OCI-LY7 (cell line): ENCODE measurements at regions of chr4 and their contacts with region 1.

Region 1: GRCh38 chr4:78656968-78657445 is 105.4 kb downstream of the ANXA3 start:
- DNase-seq: peak; percentile 41
- H3K4me3 ChIP-seq: peak overlapping the region; percentile 28
- H3K27ac ChIP-seq: no peak overlapping the region
- H3K4me1 ChIP-seq: peaks cover 35% of the 10 kb centered on the region
- CTCF ChIP-seq: no peak

Region 2: DNA sequence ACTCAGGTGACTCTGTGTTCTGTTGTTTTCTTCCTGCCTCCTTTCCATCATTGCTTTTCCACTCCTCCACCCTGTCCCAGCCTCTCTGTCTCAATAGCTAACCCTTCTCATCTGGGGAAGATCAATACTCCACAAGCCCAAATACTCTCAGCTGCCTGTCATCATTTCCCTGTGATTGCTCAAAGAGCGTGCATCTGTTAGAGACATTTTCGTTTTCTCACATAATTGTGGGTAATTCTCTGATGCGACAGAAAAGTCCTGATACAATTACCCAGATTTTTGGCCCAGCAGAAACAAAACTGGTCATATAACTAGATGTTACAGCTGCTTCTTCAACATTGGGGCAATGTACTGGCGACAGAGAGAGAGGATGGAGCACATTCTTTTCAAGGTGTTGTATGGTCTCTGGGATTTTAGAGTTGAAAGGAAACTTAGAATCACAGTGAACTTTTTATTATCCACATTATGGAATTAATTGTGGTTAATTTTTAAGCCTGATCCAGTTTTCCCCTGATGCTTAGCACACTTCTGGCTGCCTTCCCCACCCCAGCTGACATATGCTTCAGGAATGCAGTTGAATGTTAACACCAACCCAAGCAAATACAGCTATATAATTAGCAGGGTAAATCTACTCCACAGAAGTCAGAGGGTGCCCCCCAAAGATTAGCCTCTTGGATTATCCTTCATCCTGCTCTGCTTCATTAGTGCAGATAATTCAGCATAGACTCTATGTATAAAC is 276.8 kb before region 1 on chr4:
- CTCF ChIA-PET with region 1: no interaction called
- POLR2A ChIA-PET with region 1: no interaction called
- intact Hi-C with region 1: no loop called
- DNase-seq: no peak
- H3K4me3 ChIP-seq: no peak overlapping the region
- H3K27ac ChIP-seq: no peak overlapping the region
- H3K4me1 ChIP-seq: no peaks in the 10 kb centered on the region
- CTCF ChIP-seq: no peak

Region 3: GRCh38 chr4:78667764-78668163 is 10.8 kb after region 1 on chr4:
- CTCF ChIA-PET with region 1: interaction called, 3 read pairs
- POLR2A ChIA-PET with region 1: interaction called, 33 read pairs
- intact Hi-C with region 1: no loop called
- DNase-seq: peak; percentile 50
- H3K4me3 ChIP-seq: no peak overlapping the region
- H3K27ac ChIP-seq: no peak overlapping the region
- H3K4me1 ChIP-seq: peaks cover 39% of the 10 kb centered on the region
- CTCF ChIP-seq: no peak